ENCODE measurements at regions of chr13 and their contacts with region 1.

Region 1: GRCh38 chr13:46553886-46554858 is 1.2 kb downstream of the LRCH1 start:
- DNase-seq: peak; percentile 78
- ATAC-seq: peak; percentile 45
- H3K4me3 ChIP-seq: peak overlapping the region; percentile 77
- H3K27ac ChIP-seq: peak overlapping the region; percentile 63
- H3K4me1 ChIP-seq: peaks cover 26% of the 10 kb centered on the region
- H3K27me3 ChIP-seq: no peaks in the 10 kb centered on the region
- CTCF ChIP-seq: no peak

Region 2: GRCh38 chr13:46492946-46493345 is 61.2 kb before region 1 on chr13:
- CTCF ChIA-PET with region 1: interaction called, 6 read pairs
- POLR2A ChIA-PET with region 1: no interaction called
- intact Hi-C with region 1: loop called (anchors 1 kb)
- DNase-seq: peak; percentile 66
- ATAC-seq: peak; percentile 34; the same call in 1 of the 2 replicates
- H3K4me3 ChIP-seq: no peak overlapping the region
- H3K27ac ChIP-seq: no peak overlapping the region
- H3K4me1 ChIP-seq: peaks cover 10% of the 10 kb centered on the region; the same call in 1 of the 2 replicates
- H3K27me3 ChIP-seq: no peaks in the 10 kb centered on the region
- CTCF ChIP-seq: peak; percentile 70

Region 3: GRCh38 chr13:46603165-46603603 is 49.0 kb after region 1 on chr13:
- CTCF ChIA-PET with region 1: interaction called, 3 read pairs
- POLR2A ChIA-PET with region 1: no interaction called
- intact Hi-C with region 1: loop called (anchors 5 kb)
- DNase-seq: peak; percentile 11
- ATAC-seq: no peak
- H3K4me3 ChIP-seq: no peak overlapping the region
- H3K27ac ChIP-seq: no peak overlapping the region
- H3K4me1 ChIP-seq: peaks cover 46% of the 10 kb centered on the region
- H3K27me3 ChIP-seq: no peaks in the 10 kb centered on the region
- CTCF ChIP-seq: peak; percentile 53

Region 4: GRCh38 chr13:46668302-46668720 is 114.1 kb after region 1 on chr13:
- CTCF ChIA-PET with region 1: no interaction called
- POLR2A ChIA-PET with region 1: no interaction called
- intact Hi-C with region 1: loop called (anchors 10 kb)
- DNase-seq: peak; percentile 62
- ATAC-seq: peak; percentile 47
- H3K4me3 ChIP-seq: no peak overlapping the region
- H3K27ac ChIP-seq: peak overlapping the region; percentile 41; the same call in 1 of the 2 replicates
- H3K4me1 ChIP-seq: peaks cover 26% of the 10 kb centered on the region
- H3K27me3 ChIP-seq: no peaks in the 10 kb centered on the region
- CTCF ChIP-seq: no peak

Region 5: GRCh38 chr13:46721054-46721453 is 166.9 kb after region 1 on chr13:
- CTCF ChIA-PET with region 1: interaction called, 6 read pairs
- POLR2A ChIA-PET with region 1: no interaction called
- intact Hi-C with region 1: loop called (anchors 1 kb)
- DNase-seq: peak; percentile 41
- ATAC-seq: no peak
- H3K4me3 ChIP-seq: no peak overlapping the region
- H3K27ac ChIP-seq: no peak overlapping the region
- H3K4me1 ChIP-seq: no peaks in the 10 kb centered on the region
- H3K27me3 ChIP-seq: no peaks in the 10 kb centered on the region
- CTCF ChIP-seq: peak; percentile 67